Endothelial cell of umbilical vein (primary cell): ENCODE measurements at regions of chr12 and their contacts with region 1.

Region 1: GRCh38 chr12:49358483-49359141 is 8.7 kb upstream of the SPATS2 start:
- DNase-seq: peak; percentile 82
- H3K4me3 ChIP-seq: no peak overlapping the region
- H3K27ac ChIP-seq: no peak overlapping the region
- H3K4me1 ChIP-seq: no peaks in the 10 kb centered on the region
- H3K27me3 ChIP-seq: no peaks in the 10 kb centered on the region
- CTCF ChIP-seq: peak; percentile 74 to 76
- POLR2A ChIP-seq: no peak

Region 2: GRCh38 chr12:49244176-49244575 is 114.4 kb before region 1 on chr12:
- CTCF ChIA-PET with region 1: no interaction called
- POLR2A ChIA-PET with region 1: no interaction called
- dilution Hi-C with region 1: no loop called
- intact Hi-C with region 1: no loop called
- DNase-seq: no peak
- H3K4me3 ChIP-seq: no peak overlapping the region
- H3K27ac ChIP-seq: no peak overlapping the region
- H3K4me1 ChIP-seq: no peaks in the 10 kb centered on the region
- H3K27me3 ChIP-seq: no peaks in the 10 kb centered on the region
- CTCF ChIP-seq: no peak
- POLR2A ChIP-seq: no peak

Region 3: DNA sequence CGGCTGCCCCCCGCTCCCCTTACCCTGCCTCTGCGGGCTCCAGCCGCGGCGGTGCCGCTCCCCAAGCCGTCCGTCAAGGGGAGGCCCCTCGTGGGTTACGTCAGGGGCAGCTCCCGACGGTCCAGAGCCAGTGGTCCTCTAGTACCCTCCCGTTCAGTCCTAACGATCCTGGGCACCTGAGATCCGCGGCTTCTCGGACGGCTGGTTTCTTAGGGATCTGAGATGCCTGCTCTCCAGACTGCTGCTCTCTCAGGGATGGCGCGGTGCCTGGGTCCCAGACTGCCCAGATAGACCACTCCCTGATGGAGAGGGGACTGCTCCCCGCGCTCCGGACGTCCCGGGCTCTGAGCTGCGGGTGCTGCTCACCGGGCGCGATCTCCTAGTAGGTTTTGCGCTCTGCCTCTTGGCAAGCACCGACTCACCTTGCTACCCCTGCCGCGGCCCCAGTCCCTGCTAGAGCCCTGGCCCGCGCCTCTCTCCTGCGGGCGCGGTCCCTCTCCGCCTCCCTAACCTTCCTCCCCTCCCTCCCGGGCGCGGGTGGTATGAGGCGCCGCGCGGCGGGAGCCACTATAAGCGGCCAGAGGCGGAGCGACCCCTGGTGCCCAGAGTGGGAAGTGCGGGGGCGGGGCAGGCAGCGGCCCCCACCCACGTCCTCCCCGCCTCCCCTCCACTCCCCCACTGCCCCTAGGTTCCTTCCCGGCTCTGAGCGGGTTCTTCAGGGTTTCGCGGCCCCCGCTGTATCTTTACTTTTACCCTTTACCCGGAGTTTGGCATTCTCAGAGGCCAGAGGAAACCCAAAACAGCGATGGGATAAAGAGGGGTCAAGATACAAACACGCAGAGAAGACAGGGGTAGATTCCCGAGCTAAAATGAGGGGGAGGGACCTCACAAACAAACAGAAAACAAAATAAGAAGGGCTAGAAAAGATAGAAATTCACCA is 21.7 kb before region 1 on chr12 and contains the start of gene C1QL4:
- CTCF ChIA-PET with region 1: interaction called, 204 read pairs
- POLR2A ChIA-PET with region 1: no interaction called
- dilution Hi-C with region 1: no loop called
- intact Hi-C with region 1: no loop called
- DNase-seq: peak; percentile 69
- H3K4me3 ChIP-seq: peak within 1 kb of the TSS in 1 of 3 experiments; percentile 20
- H3K27ac ChIP-seq: no peak within 1 kb of the TSS
- H3K4me1 ChIP-seq: no peaks in the 10 kb centered on the region
- H3K27me3 ChIP-seq: peaks cover 59 to 70% of the 10 kb centered on the region in 2 experiments
- CTCF ChIP-seq: peak; percentile 64 to 97
- POLR2A ChIP-seq: no peak
- total RNA-seq, gene C1QL4: not detected in 2 replicates

Region 4: DNA sequence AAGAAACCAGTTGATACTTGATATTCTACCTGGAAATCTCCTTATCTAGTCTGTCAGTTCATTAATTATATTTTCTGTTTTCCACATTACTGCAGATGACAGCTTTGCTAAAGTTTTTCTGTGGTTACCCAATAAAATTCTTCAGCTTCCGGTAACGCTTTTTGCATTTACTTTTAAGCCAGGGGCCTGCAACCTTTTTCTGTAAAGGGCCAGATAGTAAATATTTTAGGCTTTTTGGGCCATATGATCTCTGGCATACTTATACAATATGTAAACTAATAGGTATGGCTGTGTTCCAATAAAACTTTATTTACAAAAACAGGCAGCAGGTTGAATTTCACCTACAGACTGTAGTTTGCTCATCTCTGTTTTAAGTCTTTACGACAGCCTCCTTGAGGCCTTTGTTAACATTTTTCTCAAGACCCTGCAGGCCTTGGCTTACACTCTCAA is 56.9 kb after region 1 on chr12:
- CTCF ChIA-PET with region 1: interaction called, 20 read pairs
- POLR2A ChIA-PET with region 1: no interaction called
- dilution Hi-C with region 1: no loop called
- intact Hi-C with region 1: no loop called
- DNase-seq: no peak
- H3K4me3 ChIP-seq: no peak overlapping the region
- H3K27ac ChIP-seq: no peak overlapping the region
- H3K4me1 ChIP-seq: no peaks in the 10 kb centered on the region
- H3K27me3 ChIP-seq: no peaks in the 10 kb centered on the region
- CTCF ChIP-seq: no peak
- POLR2A ChIP-seq: no peak

Region 5: DNA sequence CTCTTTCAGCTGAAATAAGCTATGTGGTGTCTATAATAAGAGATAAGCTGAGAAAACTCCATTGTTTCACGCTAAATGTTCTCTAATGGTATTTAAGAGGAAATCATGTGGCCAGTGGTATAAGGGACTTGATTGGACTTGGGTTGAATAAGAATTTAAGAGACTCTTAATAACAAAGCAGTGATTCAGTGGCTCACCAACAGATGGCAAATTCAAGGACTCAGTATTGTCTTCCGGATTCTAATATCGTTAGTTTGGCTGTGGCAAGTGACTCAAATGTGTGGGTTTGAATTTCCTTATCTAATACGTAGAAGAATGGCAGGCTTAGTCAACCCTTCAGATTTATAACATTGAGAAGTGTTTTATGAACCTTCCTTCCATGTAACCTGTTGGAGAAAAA is 131.1 kb after region 1 on chr12:
- CTCF ChIA-PET with region 1: interaction called, 27 read pairs
- POLR2A ChIA-PET with region 1: no interaction called
- dilution Hi-C with region 1: no loop called
- intact Hi-C with region 1: no loop called
- DNase-seq: peak; percentile 93
- H3K4me3 ChIP-seq: no peak overlapping the region
- H3K27ac ChIP-seq: peak overlapping the region; percentile 81
- H3K4me1 ChIP-seq: peaks cover 23% of the 10 kb centered on the region
- H3K27me3 ChIP-seq: no peaks in the 10 kb centered on the region
- CTCF ChIP-seq: peak in 1 of 2 donors; percentile 32
- POLR2A ChIP-seq: no peak

Region 6: DNA sequence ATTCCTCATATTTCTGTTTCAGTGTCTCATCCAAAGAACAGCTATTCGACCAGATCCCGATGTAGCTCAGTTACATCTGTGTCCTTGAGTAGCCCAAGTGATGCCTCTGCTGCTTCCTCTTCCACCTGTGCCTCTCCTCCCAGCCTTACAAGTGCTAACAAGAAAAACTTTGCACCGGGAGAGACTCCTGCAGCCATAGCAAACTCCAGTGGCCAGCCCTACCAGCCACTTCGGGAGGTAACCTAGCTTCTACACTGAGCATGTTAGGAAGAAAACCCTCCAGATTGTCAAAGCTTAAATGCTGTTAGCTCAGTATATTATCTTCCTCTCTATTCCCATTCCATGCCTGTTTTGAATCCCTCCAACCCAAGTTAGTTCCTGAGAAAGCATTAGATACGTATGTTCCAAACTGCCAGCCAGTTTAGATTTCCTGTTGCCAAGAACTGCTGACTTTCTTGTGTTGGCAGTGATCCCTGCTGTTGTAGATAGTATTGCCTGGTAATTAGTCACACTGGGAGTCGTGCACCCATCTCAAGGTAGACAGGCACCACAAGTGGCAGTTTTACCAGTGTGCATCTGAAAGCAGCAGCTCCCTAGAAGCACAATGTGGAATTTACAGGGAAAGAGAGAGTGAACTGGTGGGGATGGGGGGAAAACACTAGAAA is 166.2 kb after region 1 on chr12:
- CTCF ChIA-PET with region 1: interaction called, 679 read pairs
- POLR2A ChIA-PET with region 1: no interaction called
- dilution Hi-C with region 1: loop called (anchors 25 kb)
- intact Hi-C with region 1: no loop called
- DNase-seq: peak; percentile 39
- H3K4me3 ChIP-seq: no peak overlapping the region
- H3K27ac ChIP-seq: no peak overlapping the region
- H3K4me1 ChIP-seq: peaks cover 4% of the 10 kb centered on the region
- H3K27me3 ChIP-seq: no peaks in the 10 kb centered on the region
- CTCF ChIP-seq: no peak
- POLR2A ChIP-seq: no peak

Region 7: GRCh38 chr12:49580572-49581535 is 222.2 kb after region 1 on chr12:
- CTCF ChIA-PET with region 1: interaction called, 181 read pairs
- POLR2A ChIA-PET with region 1: no interaction called
- dilution Hi-C with region 1: no loop called
- intact Hi-C with region 1: loop called (anchors 1 kb)
- DNase-seq: peak; percentile 65
- H3K4me3 ChIP-seq: no peak overlapping the region
- H3K27ac ChIP-seq: no peak overlapping the region
- H3K4me1 ChIP-seq: no peaks in the 10 kb centered on the region
- H3K27me3 ChIP-seq: no peaks in the 10 kb centered on the region
- CTCF ChIP-seq: peak; percentile 89 to 90
- POLR2A ChIP-seq: no peak